Activated CD8-positive, alpha-beta memory T cell treated with anti-CD3 and anti-CD28 coated beads, Interleukin-2, amount 10 ng/mL, durations not matched to agents 7 days and 5 days (primary cell): ENCODE measurements at regions of chr22 and their contacts with region 1.

Region 1: GRCh38 chr22:36301384-36301828 is 48.5 kb downstream of the APOL1 start:
- DNase-seq: peak; percentile 86
- ATAC-seq: peak; percentile 86
- H3K4me3 Mint-ChIP-seq: no peak overlapping the region
- H3K27ac Mint-ChIP-seq: peak overlapping the region; percentile 71
- H3K4me1 Mint-ChIP-seq: peaks cover 9% of the 10 kb centered on the region
- H3K27me3 Mint-ChIP-seq: no peaks in the 10 kb centered on the region

Region 2: DNA sequence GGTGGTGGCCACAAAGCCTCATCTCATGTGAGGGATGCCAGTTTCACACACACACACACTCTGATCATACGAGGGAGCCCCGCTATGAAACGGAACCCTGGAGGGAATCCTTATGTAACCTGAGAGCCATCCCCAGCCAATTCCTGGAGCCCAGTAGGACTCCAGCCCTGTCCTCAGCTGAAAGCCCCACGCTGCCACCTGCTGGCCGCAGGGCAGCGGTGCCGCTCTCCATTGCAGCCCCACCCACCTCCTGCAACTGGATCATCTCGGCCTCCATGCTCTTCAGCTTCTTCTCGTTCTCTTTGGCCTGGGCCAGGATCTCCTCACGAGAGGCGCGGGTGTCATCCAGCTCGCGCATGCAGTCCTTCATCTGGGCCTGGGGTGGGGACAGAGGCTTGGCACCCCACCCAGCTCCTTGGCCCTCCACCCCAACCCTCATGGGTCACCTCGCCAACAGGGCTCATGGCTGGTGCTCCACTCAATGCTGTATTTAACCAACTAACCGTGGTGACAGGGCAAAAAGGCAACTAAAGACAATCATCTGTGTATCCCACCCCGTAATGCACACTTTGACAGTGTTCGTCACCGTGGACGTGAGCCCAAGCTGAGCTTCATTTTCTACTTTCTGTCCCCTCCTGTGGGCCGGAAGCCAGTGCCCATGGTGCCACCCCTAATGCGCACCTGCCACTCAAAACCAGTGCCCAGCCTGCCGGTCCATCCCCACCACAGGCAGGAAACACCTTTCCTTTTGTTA is 14.8 kb before region 1 on chr22:
- CTCF ChIA-PET with region 1: interaction called, 14 read pairs
- DNase-seq: peak; percentile 72
- ATAC-seq: peak; percentile 78
- H3K4me3 Mint-ChIP-seq: no peak overlapping the region
- H3K27ac Mint-ChIP-seq: peak overlapping the region; percentile 33
- H3K4me1 Mint-ChIP-seq: peaks cover 42% of the 10 kb centered on the region
- H3K27me3 Mint-ChIP-seq: no peaks in the 10 kb centered on the region

Region 3: DNA sequence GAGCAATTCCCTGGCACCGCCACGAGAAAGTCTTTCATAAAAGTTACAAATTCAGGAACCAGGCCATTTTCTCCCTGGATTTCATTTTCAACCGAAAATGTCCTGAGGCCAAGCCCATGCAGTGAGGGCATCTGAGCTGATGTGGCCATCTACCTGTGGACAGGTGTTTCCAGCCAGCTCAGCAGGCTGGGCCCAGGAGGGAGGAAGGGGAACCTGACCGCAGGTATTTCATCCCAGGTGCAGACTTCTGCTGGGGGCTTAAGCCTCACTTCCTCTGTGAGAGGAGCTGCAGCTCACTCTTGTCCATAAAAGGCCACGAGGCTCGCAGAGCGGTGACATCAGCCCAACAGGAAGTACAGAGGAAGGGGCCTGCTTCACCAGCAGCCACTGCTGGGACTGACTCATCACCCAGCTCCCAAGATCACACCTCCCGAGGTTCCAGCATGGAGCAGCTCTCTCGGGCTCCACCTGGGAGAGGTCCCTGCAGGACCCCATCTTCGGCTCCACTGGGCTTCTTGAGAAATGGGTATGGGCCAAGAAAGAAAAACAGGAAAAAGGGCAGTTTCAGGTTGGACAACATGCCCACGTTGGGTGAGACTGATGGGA is 30.0 kb after region 1 on chr22:
- CTCF ChIA-PET with region 1: interaction called, 30 read pairs
- DNase-seq: peak; percentile 94
- ATAC-seq: peak; percentile 61
- H3K4me3 Mint-ChIP-seq: peak overlapping the region; percentile 77
- H3K27ac Mint-ChIP-seq: peak overlapping the region; percentile 99
- H3K4me1 Mint-ChIP-seq: peaks cover 98% of the 10 kb centered on the region
- H3K27me3 Mint-ChIP-seq: no peaks in the 10 kb centered on the region

Region 4: DNA sequence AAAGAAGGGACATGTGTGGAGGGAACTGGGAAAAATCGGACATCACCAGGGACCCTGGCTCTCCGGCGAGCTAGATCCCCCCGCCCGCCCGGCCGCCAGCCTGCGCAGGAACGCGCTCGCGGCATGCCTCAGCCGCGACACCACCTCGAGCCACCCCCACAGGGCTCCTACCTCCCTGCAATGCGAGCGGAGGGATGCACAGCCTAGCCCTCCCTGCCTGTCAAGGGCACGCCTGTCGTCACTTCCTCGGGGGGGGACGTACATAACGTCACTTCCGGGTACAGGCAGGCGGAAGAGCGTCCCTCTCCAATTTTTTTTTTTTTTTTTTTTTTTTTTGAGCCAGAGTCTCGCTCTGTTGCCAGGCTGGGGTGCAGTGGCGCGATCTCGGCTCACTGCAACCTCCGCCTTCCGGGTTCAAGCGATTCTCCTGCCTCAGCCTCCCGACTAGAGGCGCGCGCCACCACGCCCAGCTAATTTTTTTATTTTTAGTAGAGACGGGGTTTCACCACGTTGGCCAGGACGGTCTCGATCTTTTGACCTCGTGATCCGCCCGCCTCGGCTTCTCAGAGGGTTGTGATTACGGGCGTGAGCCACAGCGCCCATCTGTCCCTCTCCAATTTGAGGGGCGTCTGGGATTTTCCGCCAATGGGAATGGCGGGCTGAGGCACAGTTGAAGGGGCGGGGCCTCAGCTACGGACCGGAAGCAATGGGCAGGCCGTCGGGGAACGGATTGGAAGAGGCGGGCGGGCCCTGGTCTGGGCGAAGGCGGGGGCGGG is 180.2 kb after region 1 on chr22 and contains the start of gene TXN2:
- CTCF ChIA-PET with region 1: interaction called, 16 read pairs
- DNase-seq: peak; percentile 98
- ATAC-seq: peak; percentile 90
- H3K4me3 Mint-ChIP-seq: peak within 1 kb of the TSS; percentile 93
- H3K27ac Mint-ChIP-seq: peak within 1 kb of the TSS; percentile 92
- H3K4me1 Mint-ChIP-seq: peaks cover 30% of the 10 kb centered on the region
- H3K27me3 Mint-ChIP-seq: no peaks in the 10 kb centered on the region
- total RNA-seq, gene TXN2: 78.7 to 82.6 TPM